Activated naive CD4-positive, alpha-beta T cell treated with anti-CD3 and anti-CD28 coated beads for 36 hours (primary cell): ENCODE measurements at regions of chr22 and their contacts with region 1.

Region 1: GRCh38 chr22:25623310-25623734 is 58.8 kb downstream of the GRK3 start:
- DNase-seq: peak; percentile 45
- H3K4me3 Mint-ChIP-seq: no peak overlapping the region
- H3K27ac Mint-ChIP-seq: no peak overlapping the region
- H3K4me1 Mint-ChIP-seq: peaks cover 18% of the 10 kb centered on the region
- H3K27me3 Mint-ChIP-seq: no peaks in the 10 kb centered on the region

Region 2: DNA sequence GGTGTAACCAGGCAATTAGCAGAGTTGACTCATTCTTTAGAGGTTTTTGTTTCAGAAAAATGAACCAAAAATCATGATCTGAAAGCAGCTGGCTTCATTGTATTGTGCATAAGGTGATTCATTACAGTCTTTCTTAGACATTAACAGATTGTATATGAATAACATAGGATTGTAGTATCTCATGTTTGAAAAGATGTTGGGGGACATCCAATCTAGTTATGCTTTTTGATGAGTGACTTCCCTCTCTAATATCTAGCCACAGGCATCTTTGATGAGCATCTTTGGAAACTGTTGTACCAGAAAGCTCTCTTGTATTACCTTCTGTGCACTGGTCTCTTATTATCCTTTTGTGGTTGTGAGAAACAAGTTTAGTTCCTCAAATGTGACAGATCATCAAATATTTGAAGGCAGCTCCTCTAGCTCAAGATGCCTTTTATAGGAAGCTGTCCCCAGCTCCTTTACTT is 50.6 kb before region 1 on chr22:
- CTCF ChIA-PET with region 1: no interaction called
- intact Hi-C with region 1: loop called (anchors 5 kb)
- DNase-seq: no peak
- H3K4me3 Mint-ChIP-seq: no peak overlapping the region
- H3K27ac Mint-ChIP-seq: no peak overlapping the region
- H3K4me1 Mint-ChIP-seq: peaks cover 12% of the 10 kb centered on the region
- H3K27me3 Mint-ChIP-seq: no peaks in the 10 kb centered on the region